Thyroid gland (tissue), 4 donors: ENCODE measurements at regions of chr3 and their contacts with region 1.

Region 1: GRCh38 chr3:124559881-124560574 is 170.2 kb upstream of the UMPS start:
- DNase-seq: peak; percentile 73 to 80
- H3K4me3 ChIP-seq: no peak overlapping the region
- H3K27ac ChIP-seq: peak overlapping the region; percentile 39 to 88 (median 66)
- H3K4me1 ChIP-seq: peaks cover 12 to 16% of the 10 kb centered on the region in 2 donors
- H3K27me3 ChIP-seq: no peaks in the 10 kb centered on the region
- CTCF ChIP-seq: peak; percentile 65 to 90 (median 78)
- POLR2A ChIP-seq: no peak

Region 2: DNA sequence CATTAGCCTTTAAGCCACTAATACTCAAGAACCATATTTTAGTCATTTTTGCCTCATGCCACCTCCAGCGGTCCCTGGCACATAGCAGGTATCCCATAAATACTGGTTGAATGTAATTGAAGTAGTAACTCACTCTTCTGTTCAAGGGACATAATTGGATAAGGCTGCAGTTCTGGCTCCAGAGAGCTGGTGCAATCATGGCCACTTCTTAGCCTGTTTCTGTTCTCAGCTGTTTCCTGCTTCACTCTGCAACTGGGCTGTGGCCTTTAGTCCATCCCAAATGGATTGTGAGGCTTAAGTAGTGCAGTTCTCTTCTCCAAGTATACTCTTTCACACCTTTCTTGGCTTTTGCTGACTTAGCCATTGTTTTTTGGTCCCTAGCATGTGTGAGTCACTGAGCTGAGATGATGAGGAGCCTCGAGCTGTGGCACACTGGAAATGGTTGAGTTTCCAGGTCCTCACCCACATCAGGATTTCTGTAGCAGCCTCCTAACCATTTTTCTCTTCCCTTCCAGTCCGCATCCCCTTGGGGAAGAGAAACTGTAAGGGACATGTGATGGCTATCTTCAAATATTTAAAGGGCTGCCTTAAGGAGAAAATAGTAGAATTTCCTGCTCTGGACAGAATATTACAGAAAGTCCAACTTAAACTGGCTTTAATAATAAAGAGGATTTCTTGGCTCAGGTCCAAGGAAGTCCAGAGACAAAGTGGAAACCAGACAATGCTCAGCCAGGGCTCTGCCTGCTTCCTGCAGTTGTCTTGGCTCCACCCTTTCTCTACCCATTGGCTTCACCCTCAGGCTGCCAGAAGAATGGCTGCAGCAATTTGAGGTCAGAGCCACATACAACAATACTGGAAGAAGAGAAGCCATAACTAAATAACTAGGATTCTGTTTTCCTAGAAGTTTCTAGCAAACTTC is 262.7 kb before region 1 on chr3:
- intact Hi-C with region 1: no loop called
- DNase-seq: no peak
- H3K4me3 ChIP-seq: no peak overlapping the region
- H3K27ac ChIP-seq: peak overlapping the region in 1 of 3 donors; percentile 31
- H3K4me1 ChIP-seq: peaks cover 0 to 20% of the 10 kb centered on the region in 2 donors
- H3K27me3 ChIP-seq: no peaks in the 10 kb centered on the region
- CTCF ChIP-seq: no peak
- POLR2A ChIP-seq: no peak

Region 3: GRCh38 chr3:124895756-124896155 is 335.7 kb after region 1 on chr3:
- intact Hi-C with region 1: loop called (anchors 10 kb)
- DNase-seq: no peak
- H3K4me3 ChIP-seq: no peak overlapping the region
- H3K27ac ChIP-seq: no peak overlapping the region
- H3K4me1 ChIP-seq: no peaks in the 10 kb centered on the region
- H3K27me3 ChIP-seq: no peaks in the 10 kb centered on the region
- CTCF ChIP-seq: no peak
- POLR2A ChIP-seq: no peak